CD4-positive, alpha-beta T cell (primary cell): ENCODE measurements at regions of chr7 and their contacts with region 1.

Region 1: GRCh38 chr7:82105463-82105862 is 335.6 kb upstream of the HGF start:
- DNase-seq: no peak
- ATAC-seq: no peak
- H3K4me3 ChIP-seq: no peak overlapping the region
- H3K4me3 Mint-ChIP-seq: no peak overlapping the region
- H3K27ac ChIP-seq: no peak overlapping the region
- H3K27ac Mint-ChIP-seq: no peak overlapping the region
- H3K4me1 ChIP-seq: no peaks in the 10 kb centered on the region
- H3K4me1 Mint-ChIP-seq: no peaks in the 10 kb centered on the region
- H3K27me3 ChIP-seq: no peaks in the 10 kb centered on the region
- H3K27me3 Mint-ChIP-seq: no peaks in the 10 kb centered on the region
- CTCF ChIP-seq: no peak

Region 2: DNA sequence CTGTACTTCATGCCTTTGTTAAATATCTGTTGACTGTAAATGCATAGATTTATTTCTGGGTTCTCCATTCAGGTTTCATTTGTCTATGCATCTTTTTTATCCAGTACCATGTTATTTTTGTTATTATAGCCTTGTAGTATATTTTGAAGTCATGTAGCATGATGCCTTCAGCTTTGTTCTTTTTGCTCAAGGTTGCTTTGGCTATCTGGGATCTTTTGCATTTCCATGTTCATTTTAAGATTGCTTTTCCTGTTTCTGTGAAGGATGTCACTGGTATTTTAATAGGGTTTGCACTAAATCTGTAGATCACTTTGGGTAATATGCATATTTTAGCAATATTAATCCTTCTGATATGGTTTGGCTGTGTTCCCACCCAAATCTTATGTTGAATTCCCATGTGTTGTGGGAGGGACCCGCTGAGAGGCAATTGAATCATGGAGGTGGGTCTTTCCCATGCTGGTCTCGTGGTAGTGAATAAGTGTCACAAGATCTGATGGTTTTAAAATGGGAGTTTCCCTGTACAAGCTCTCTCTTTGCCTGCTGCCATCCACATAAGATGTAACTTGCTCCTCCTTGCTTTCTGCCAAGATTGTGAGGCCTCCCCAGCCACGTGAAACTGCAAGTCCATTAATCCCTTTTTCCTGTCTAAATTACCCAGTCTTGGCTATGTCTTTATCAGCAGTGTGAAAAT is 883.8 kb before region 1 on chr7:
- CTCF ChIA-PET with region 1: no interaction called
- POLR2A ChIA-PET with region 1: no interaction called
- intact Hi-C with region 1: no loop called
- DNase-seq: no peak
- ATAC-seq: no peak
- H3K4me3 ChIP-seq: no peak overlapping the region
- H3K4me3 Mint-ChIP-seq: no peak overlapping the region
- H3K27ac ChIP-seq: no peak overlapping the region
- H3K27ac Mint-ChIP-seq: no peak overlapping the region
- H3K4me1 ChIP-seq: no peaks in the 10 kb centered on the region
- H3K4me1 Mint-ChIP-seq: no peaks in the 10 kb centered on the region
- H3K27me3 ChIP-seq: no peaks in the 10 kb centered on the region
- H3K27me3 Mint-ChIP-seq: no peaks in the 10 kb centered on the region
- CTCF ChIP-seq: no peak

Region 3: GRCh38 chr7:82036146-82036886 is 69.1 kb before region 1 on chr7:
- CTCF ChIA-PET with region 1: no interaction called
- POLR2A ChIA-PET with region 1: no interaction called
- intact Hi-C with region 1: loop called in 1 of 2 experiments (anchors 2 kb)
- DNase-seq: no peak
- ATAC-seq: no peak
- H3K4me3 ChIP-seq: no peak overlapping the region
- H3K4me3 Mint-ChIP-seq: no peak overlapping the region
- H3K27ac ChIP-seq: no peak overlapping the region
- H3K27ac Mint-ChIP-seq: no peak overlapping the region
- H3K4me1 ChIP-seq: no peaks in the 10 kb centered on the region
- H3K4me1 Mint-ChIP-seq: no peaks in the 10 kb centered on the region
- H3K27me3 ChIP-seq: no peaks in the 10 kb centered on the region
- H3K27me3 Mint-ChIP-seq: no peaks in the 10 kb centered on the region
- CTCF ChIP-seq: no peak

Region 4: GRCh38 chr7:82631998-82632397 is 526.5 kb after region 1 on chr7:
- CTCF ChIA-PET with region 1: no interaction called
- POLR2A ChIA-PET with region 1: no interaction called
- intact Hi-C with region 1: no loop called
- DNase-seq: no peak
- ATAC-seq: no peak
- H3K4me3 ChIP-seq: no peak overlapping the region
- H3K4me3 Mint-ChIP-seq: no peak overlapping the region
- H3K27ac ChIP-seq: no peak overlapping the region
- H3K27ac Mint-ChIP-seq: no peak overlapping the region
- H3K4me1 ChIP-seq: no peaks in the 10 kb centered on the region
- H3K4me1 Mint-ChIP-seq: no peaks in the 10 kb centered on the region
- H3K27me3 ChIP-seq: no peaks in the 10 kb centered on the region
- H3K27me3 Mint-ChIP-seq: no peaks in the 10 kb centered on the region
- CTCF ChIP-seq: no peak